ENCODE measurements at regions of chr10 and their contacts with region 1.

Region 1: DNA sequence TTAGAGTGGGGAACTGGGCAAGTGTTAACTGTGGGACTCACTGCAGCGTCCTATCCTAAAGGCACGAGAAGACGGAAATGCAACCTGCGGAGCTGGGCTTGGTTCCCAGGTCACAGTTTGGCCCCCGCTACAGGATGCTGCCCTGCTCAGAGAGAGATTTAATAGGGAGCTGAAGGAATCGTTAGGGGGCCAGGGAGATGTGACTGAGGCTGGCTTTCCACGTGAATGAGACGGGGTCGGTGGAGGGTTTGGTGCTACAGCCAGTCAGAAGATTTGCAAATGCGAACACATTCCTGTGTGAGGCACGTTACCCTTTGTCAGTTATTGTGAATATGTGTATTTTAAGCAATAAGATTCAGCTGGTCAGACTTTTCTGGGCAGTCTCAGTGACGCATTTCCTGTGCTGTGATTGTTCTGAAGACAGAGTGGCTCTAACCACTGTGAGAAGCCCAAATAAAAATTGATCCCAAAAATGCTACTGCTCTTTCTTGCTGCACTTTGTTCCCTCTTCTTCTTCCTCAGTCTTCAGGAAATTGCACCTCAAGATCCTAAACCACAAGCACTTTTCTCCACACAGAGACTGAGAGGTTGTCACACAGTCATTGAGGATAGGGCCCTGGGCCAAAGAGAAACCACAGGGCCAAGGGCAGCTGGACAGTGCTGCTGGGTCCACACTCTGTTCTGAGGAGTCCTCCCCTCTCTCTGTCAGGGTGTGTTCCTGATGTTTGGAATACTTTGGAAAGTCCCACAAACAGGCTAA is 21.2 kb downstream of the CYP17A1 start:
- DNase-seq: no peak
- ATAC-seq: peak; percentile 8
- H3K4me3 ChIP-seq: peak overlapping the region in 1 of 3 experiments; percentile 56; a peak in 2 of 6 replicates
- H3K27ac ChIP-seq: peak overlapping the region; percentile 90
- H3K4me1 ChIP-seq: peaks cover 42% of the 10 kb centered on the region
- H3K27me3 ChIP-seq: no peaks in the 10 kb centered on the region
- CTCF ChIP-seq: no peak
- EP300 ChIP-seq: no peak
- POLR2A ChIP-seq: no peak
- RAD21 ChIP-seq: no peak

Region 2: GRCh38 chr10:102743588-102744373 is 72.2 kb before region 1 on chr10 and contains the start of gene WBP1L:
- CTCF ChIA-PET with region 1: no interaction called
- POLR2A ChIA-PET with region 1: interaction called, 25 read pairs
- in situ Hi-C with region 1: loop called (anchors 10 kb)
- intact Hi-C with region 1: loop called (anchors 2 kb)
- DNase-seq: peak; percentile 99
- ATAC-seq: peak; percentile 94
- H3K4me3 ChIP-seq: peak within 1 kb of the TSS; percentile 72 to 94 (median 82)
- H3K27ac ChIP-seq: peak within 1 kb of the TSS; percentile 41
- H3K4me1 ChIP-seq: peaks cover 35% of the 10 kb centered on the region
- H3K27me3 ChIP-seq: no peaks in the 10 kb centered on the region; a peak in 1 of 5 replicates
- CTCF ChIP-seq: no peak
- EP300 ChIP-seq: no peak
- POLR2A ChIP-seq: peak; percentile 25 to 64
- RAD21 ChIP-seq: no peak; the same call in 1 of the 2 replicates
- total RNA-seq, gene WBP1L: 8.3 and 11.6 TPM in 2 replicates

Region 3: DNA sequence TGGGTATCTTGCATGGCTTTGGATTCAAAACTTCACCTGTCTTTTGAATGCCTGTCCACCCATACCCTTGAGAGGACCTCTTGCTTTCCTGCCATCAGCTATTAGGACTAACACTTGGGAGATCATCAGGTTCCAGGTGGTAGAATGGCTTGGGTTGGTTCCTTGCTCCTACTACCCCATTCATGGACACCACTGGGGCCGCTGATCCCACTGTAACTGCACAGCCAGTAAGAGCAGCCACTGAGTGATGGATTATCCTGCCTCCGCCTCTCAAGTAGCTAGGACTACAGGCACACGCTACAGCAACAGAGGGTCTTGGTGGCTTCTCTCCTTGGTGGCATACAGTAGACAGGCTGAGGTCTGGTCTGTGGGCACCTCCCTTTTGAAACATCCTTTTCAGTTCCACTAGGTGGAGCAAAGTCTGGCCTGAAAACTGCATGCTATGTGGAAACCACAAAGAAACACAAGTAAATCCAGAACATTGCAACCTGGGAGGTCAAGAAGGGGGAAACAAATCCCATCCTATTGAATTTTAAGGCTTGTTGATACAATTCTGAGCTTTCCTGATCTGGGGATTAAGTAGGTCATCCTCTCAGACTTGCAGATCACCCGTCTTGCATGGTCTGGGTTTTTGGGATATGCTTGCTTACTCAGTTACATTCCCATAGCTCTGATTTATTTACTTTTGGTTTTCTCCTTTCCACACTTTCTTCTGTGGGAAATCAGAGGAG is 62.9 kb before region 1 on chr10:
- CTCF ChIA-PET with region 1: no interaction called
- POLR2A ChIA-PET with region 1: interaction called, 3 read pairs
- in situ Hi-C with region 1: loop called (anchors 10 kb)
- intact Hi-C with region 1: loop called (anchors 1 kb)
- DNase-seq: peak; percentile 63
- ATAC-seq: peak; percentile 96
- H3K4me3 ChIP-seq: no peak overlapping the region
- H3K27ac ChIP-seq: no peak overlapping the region
- H3K4me1 ChIP-seq: peaks cover 31% of the 10 kb centered on the region
- H3K27me3 ChIP-seq: no peaks in the 10 kb centered on the region
- CTCF ChIP-seq: peak; percentile 75
- EP300 ChIP-seq: no peak
- POLR2A ChIP-seq: no peak
- RAD21 ChIP-seq: peak; percentile 68

Region 4: DNA sequence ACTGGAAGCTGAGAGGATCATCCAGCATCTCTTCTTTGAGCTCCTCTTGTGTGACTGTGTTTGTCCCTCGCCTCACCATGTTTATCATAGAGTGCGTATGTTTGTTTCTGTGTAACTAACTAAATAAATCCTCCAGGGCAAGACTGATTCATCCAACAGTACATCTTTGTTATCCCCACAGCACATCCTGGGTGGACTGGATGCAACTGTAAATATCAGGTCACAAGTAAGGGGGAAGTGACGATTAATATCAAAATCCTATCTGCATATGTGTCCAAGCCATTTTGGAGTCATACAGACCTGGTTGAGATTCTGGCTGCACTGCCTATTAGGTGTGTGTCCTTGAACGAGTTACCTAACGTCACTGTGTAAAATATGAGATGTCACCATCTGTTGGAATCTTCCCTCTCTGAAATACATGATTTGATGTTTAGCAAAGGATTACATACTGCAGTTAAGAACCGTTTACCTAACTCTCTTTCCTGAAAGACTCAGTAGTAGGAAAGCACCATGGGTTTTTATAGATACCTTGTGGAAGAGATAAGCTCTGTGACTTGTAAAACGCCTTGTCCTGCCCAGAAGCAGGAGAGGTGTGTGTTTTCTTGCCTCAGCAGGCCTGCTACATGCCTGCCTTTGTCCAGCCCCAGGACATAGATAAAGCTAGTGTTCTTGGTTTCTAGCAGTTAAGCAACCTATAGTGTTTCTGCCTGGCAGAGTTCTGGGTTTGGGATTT is 46.4 kb before region 1 on chr10:
- CTCF ChIA-PET with region 1: no interaction called
- POLR2A ChIA-PET with region 1: interaction called, 12 read pairs
- in situ Hi-C with region 1: no loop called
- intact Hi-C with region 1: no loop called
- DNase-seq: peak; percentile 96
- ATAC-seq: peak; percentile 97
- H3K4me3 ChIP-seq: peak overlapping the region in 1 of 3 experiments; percentile 7; a peak in 1 of 6 replicates
- H3K27ac ChIP-seq: peak overlapping the region; percentile 87
- H3K4me1 ChIP-seq: peaks cover 53% of the 10 kb centered on the region
- H3K27me3 ChIP-seq: no peaks in the 10 kb centered on the region
- CTCF ChIP-seq: no peak
- EP300 ChIP-seq: peak in 1 of 2 experiments; percentile 70; a peak in 2 of 4 replicates
- POLR2A ChIP-seq: no peak
- RAD21 ChIP-seq: no peak

Region 5: DNA sequence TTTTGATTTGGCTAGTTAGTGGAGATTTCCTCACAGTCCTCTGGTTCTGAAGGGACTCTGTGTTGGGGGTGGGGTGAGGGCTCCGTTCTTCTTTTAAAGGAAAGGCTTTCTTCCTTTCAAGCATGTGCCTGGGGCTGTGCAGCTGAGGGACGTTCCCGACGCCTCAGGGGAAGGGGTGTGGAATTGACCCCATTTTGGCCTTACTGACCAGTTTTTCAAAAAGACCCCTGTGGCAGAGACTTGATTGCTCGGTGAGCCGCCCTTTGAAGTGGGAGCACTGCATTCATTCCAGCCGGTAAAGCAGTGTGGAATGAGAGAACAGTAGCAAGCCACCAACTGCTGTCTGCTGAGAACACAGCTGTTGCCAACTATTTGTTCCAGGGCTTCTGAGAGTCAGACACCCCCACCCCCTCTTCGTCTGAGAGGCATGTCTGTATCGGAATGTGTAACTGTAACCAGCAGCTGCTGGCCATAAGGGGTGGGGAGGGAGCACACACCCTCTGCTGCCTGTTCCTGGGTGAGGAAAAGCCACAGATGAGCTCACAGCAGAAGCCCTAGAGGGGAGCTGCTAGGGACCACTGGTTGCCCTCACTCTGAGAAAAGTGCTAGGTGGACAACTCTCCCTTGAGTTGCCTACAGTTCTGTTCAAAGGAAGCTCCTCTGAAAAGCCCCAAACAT is 39.1 kb before region 1 on chr10:
- CTCF ChIA-PET with region 1: no interaction called
- POLR2A ChIA-PET with region 1: interaction called, 10 read pairs
- in situ Hi-C with region 1: no loop called
- intact Hi-C with region 1: no loop called
- DNase-seq: peak; percentile 85
- ATAC-seq: peak; percentile 83
- H3K4me3 ChIP-seq: peak overlapping the region; percentile 55 to 63 (median 62)
- H3K27ac ChIP-seq: peak overlapping the region; percentile 33
- H3K4me1 ChIP-seq: peaks cover 47% of the 10 kb centered on the region
- H3K27me3 ChIP-seq: no peaks in the 10 kb centered on the region; a peak in 1 of 5 replicates
- CTCF ChIP-seq: no peak
- EP300 ChIP-seq: no peak
- POLR2A ChIP-seq: no peak; a peak in 1 of 4 replicates
- RAD21 ChIP-seq: no peak

Region 6: DNA sequence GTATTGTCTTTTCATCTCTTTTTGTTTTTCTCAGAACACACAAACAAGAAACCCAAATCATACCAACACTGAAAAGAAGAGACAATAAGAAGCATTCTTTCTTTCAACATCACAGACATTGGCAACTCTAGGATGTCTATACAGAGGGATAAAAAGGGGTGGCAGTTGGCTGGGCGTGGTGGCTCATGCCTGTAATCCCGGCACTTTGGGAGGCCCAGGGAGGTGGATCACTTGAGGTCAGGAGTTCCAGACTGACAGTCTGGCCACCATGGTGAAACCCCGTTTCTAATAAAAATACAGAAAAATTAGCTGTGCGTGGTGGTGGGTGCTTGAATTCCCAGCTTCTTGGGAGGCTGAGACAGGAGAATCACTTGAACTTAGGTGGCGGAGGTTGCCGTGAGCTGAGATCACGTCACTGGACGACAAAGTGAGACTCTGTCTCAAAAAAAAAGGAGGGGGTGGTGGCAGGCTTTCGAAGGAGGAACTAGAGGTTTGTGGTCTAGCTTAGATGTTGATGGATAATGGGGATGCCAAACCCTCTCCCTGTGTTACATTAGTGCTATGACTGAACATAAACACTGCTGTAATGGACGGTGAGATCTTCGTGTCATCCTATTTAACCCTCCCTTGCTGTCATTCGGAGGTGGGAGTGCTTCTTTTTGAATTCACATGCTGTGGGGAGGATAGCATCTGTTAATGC is 111.5 kb after region 1 on chr10:
- CTCF ChIA-PET with region 1: no interaction called
- POLR2A ChIA-PET with region 1: no interaction called
- in situ Hi-C with region 1: no loop called
- intact Hi-C with region 1: no loop called
- DNase-seq: no peak
- ATAC-seq: no peak
- H3K4me3 ChIP-seq: no peak overlapping the region
- H3K27ac ChIP-seq: no peak overlapping the region
- H3K4me1 ChIP-seq: peaks cover 21% of the 10 kb centered on the region
- H3K27me3 ChIP-seq: no peaks in the 10 kb centered on the region; a peak in 1 of 5 replicates
- CTCF ChIP-seq: no peak
- EP300 ChIP-seq: no peak
- POLR2A ChIP-seq: no peak
- RAD21 ChIP-seq: no peak

Measured in HepG2 (cell line).